ENCODE measurements at regions of chr17 and their contacts with region 1.

Region 1: DNA sequence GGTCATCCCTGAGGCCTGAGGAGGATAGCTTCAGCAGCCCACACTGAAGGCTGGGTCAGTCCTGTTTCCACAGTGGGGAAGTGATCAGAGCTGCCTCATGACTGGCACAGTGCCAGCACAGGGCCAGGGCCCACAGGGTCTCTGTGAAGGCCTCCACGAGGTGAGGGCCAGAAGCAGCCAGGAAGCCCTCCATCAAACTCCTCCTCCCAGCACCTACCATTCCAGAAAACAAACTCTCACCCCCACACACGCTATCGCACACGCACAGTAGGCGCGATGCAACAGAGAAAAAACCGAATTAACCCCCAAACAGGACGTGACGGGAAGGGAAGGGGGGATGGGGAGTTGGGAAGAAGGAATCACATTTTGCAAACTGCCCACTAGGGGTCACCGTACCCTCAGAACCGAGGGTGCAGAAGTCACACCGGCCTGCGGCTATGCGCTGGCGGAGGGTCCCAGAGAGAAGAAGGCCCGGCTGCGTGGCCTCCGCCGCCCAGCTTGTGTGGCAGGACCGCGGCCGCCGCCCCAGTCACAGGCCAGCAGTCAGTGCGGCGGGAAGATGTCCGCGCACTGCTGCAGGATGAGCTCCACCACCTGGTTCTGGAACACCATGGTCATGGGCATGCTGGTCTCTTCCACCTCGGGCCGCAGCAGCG is 37.6 kb downstream of the ARHGAP27 start:
- DNase-seq: peak; percentile 59 to 73
- ATAC-seq: peak; percentile 46 to 82 (median 70)
- H3K4me3 ChIP-seq: peak overlapping the region in 9 of 10 donors; percentile 4 to 44 (median 30)
- H3K27ac ChIP-seq: peak overlapping the region in 1 of 10 donors; percentile 14
- H3K4me1 ChIP-seq: peaks cover 0 to 26% (median 4%) of the 10 kb centered on the region in 9 donors
- H3K27me3 ChIP-seq: peaks cover 0 to 2% (median 0%) of the 10 kb centered on the region in 7 donors
- CTCF ChIP-seq: peak; percentile 48 to 80 (median 74)

Region 2: GRCh38 chr17:45235416-45236281 is 159.4 kb before region 1 on chr17:
- intact Hi-C with region 1: no loop called
- DNase-seq: peak; percentile 70 to 74
- ATAC-seq: peak in 7 of 8 donors; percentile 32 to 64 (median 49)
- H3K4me3 ChIP-seq: no peak overlapping the region
- H3K27ac ChIP-seq: peak overlapping the region in 1 of 10 donors; percentile 52
- H3K4me1 ChIP-seq: peaks cover 0 to 39% (median 11%) of the 10 kb centered on the region in 9 donors
- H3K27me3 ChIP-seq: no peaks in the 10 kb centered on the region
- CTCF ChIP-seq: peak; percentile 60 to 88 (median 79)

Region 3: GRCh38 chr17:45428050-45428617 is 33.1 kb after region 1 on chr17:
- intact Hi-C with region 1: loop called in 4 of 10 experiments (anchors 1 to 5 kb)
- DNase-seq: peak; percentile 59 to 76
- ATAC-seq: peak; percentile 38 to 65 (median 58)
- H3K4me3 ChIP-seq: peak overlapping the region in 5 of 10 donors; percentile 11 to 26 (median 17)
- H3K27ac ChIP-seq: peak overlapping the region in 2 of 10 donors; percentile 19 to 75
- H3K4me1 ChIP-seq: peaks cover 20 to 84% (median 63%) of the 10 kb centered on the region in 9 donors
- H3K27me3 ChIP-seq: peaks cover 12 to 31% (median 27%) of the 10 kb centered on the region in 7 donors
- CTCF ChIP-seq: peak; percentile 97 to 100 (median 99)